SK-N-SH (cell line): ENCODE measurements at regions of chr17 and their contacts with region 1.

Region 1: GRCh38 chr17:47615766-47616424 is 33.8 kb upstream of the KPNB1 start:
- DNase-seq: peak; percentile 60
- H3K4me3 ChIP-seq: no peak overlapping the region
- H3K27ac ChIP-seq: no peak overlapping the region
- H3K4me1 ChIP-seq: peaks cover 0 to 2% of the 10 kb centered on the region in 2 experiments; a peak in 1 of 4 replicates
- H3K27me3 ChIP-seq: no peaks in the 10 kb centered on the region
- CTCF ChIP-seq: peak; percentile 95
- EP300 ChIP-seq: no peak
- RAD21 ChIP-seq: peak; percentile 88

Region 2: DNA sequence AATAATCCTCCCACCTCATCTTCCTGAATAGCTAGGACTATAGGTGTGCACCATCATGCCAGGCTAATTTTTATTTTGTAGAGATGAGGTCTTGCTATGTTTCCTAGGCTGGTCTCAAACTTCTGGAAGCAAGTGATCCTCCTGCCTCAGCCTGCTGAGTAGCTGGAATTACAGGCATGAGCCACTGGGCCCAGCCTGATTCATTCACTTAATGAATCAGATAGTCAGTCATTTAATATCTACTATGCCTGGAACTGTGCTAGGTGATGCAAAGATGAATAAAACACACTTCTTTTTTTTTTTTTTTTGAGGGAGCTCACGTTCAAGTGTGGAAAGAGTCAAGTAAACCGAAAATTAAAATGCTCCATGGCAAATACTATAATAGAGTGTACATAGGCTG is 252.7 kb before region 1 on chr17:
- CTCF ChIA-PET with region 1: interaction called, 21 read pairs
- POLR2A ChIA-PET with region 1: no interaction called
- DNase-seq: no peak
- H3K4me3 ChIP-seq: no peak overlapping the region
- H3K27ac ChIP-seq: no peak overlapping the region
- H3K4me1 ChIP-seq: no peaks in the 10 kb centered on the region
- H3K27me3 ChIP-seq: no peaks in the 10 kb centered on the region
- CTCF ChIP-seq: no peak
- EP300 ChIP-seq: no peak
- RAD21 ChIP-seq: no peak

Region 3: DNA sequence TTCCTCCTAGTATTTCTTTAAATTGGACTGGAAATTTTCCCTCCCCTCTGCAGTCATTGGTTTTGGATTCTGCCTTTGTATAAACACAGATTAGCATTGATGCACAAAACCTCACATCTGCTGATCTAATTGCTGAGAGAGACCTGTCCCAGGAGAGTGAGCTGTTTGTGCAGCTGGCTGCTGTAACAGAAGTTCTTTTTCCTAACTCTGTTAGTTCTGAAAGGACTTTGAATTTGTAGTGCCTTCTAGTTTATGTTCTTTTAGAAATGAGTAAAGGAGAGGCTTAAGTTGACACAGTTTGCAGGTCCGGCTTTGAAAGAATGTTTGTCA is 11.3 kb before region 1 on chr17:
- CTCF ChIA-PET with region 1: interaction called, 73 read pairs
- POLR2A ChIA-PET with region 1: no interaction called
- DNase-seq: peak; percentile 37
- H3K4me3 ChIP-seq: no peak overlapping the region
- H3K27ac ChIP-seq: peak overlapping the region; percentile 7 to 49
- H3K4me1 ChIP-seq: peaks cover 11 to 15% of the 10 kb centered on the region in 2 experiments; a peak in 3 of 4 replicates
- H3K27me3 ChIP-seq: no peaks in the 10 kb centered on the region
- CTCF ChIP-seq: no peak
- EP300 ChIP-seq: no peak
- RAD21 ChIP-seq: no peak

Region 4: GRCh38 chr17:47633996-47634395 is 18.1 kb after region 1 on chr17:
- CTCF ChIA-PET with region 1: interaction called, 79 read pairs
- POLR2A ChIA-PET with region 1: interaction called, 4 read pairs
- DNase-seq: no peak
- H3K4me3 ChIP-seq: no peak overlapping the region
- H3K27ac ChIP-seq: no peak overlapping the region
- H3K4me1 ChIP-seq: peaks cover 0 to 4% of the 10 kb centered on the region in 2 experiments; a peak in 1 of 4 replicates
- H3K27me3 ChIP-seq: no peaks in the 10 kb centered on the region
- CTCF ChIP-seq: no peak
- EP300 ChIP-seq: no peak
- RAD21 ChIP-seq: no peak

Region 5: DNA sequence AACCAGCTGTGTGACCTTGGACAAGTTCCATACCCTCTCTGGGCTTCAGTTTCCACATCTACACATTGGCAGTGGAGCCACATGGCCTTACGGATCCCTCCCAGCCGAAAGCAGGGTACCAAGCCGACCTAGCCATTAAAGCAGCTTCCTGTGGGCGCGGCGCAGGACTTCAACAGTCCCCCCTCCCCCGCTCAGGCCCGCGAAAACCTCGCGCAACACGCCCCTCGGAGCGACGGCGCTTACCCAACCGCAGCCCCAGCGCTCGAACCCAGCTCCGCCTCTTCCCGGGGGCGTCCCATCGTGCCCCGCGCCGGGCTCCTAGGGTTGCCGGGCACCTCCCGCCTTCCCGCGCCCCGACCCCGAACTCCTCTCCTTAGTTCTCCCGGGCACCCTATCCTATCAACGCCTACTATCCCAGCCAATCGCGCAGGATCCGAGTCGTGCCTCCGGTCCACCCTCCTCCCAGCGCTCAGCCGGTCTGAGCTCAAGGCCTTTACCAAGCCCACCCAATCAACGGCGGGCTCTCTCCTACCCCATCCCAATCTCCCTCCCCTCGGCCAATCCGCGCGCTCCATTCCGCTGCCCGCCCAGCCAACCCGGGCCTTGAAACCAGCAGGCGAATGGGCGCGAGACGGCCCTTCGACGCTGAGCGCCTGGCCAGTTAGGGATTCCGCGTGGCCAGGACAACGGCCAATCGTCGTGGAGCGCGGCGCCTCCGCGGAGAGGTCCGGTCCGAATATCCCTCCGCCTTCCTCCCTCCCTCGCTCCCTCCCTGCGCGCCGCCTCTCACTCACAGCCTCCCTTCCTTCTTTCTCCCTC is 33.5 kb after region 1 on chr17 and contains the start of gene KPNB1:
- CTCF ChIA-PET with region 1: interaction called, 20 read pairs
- POLR2A ChIA-PET with region 1: interaction called, 3 read pairs
- DNase-seq: peak; percentile 95
- H3K4me3 ChIP-seq: peak within 1 kb of the TSS; percentile 67 to 80
- H3K27ac ChIP-seq: peak within 1 kb of the TSS; percentile 71 to 89
- H3K4me1 ChIP-seq: peaks cover 8 to 18% of the 10 kb centered on the region in 2 experiments
- H3K27me3 ChIP-seq: no peaks in the 10 kb centered on the region
- CTCF ChIP-seq: no peak
- EP300 ChIP-seq: peak; percentile 7 to 30; a peak in 2 of 4 replicates
- RAD21 ChIP-seq: no peak
- polyA plus RNA-seq, gene KPNB1: 89.5 and 142 TPM in 2 replicates